CD8-positive, alpha-beta memory T cell (primary cell): ENCODE measurements at regions of chr3 and their contacts with region 1.

Region 1: GRCh38 chr3:46987743-46988401 is 8.4 kb downstream of the NBEAL2 start:
- DNase-seq: peak; percentile 86 to 96 (median 89)
- H3K4me3 ChIP-seq: peak overlapping the region; percentile 53
- H3K4me3 Mint-ChIP-seq: peak overlapping the region; percentile 74 to 90 (median 83)
- H3K27ac ChIP-seq: peak overlapping the region; percentile 84
- H3K27ac Mint-ChIP-seq: peak overlapping the region; percentile 73 to 97 (median 94)
- H3K4me1 ChIP-seq: peaks cover 63% of the 10 kb centered on the region
- H3K4me1 Mint-ChIP-seq: peaks cover 64 to 87% (median 73%) of the 10 kb centered on the region in 3 donors
- H3K27me3 ChIP-seq: no peaks in the 10 kb centered on the region
- H3K27me3 Mint-ChIP-seq: no peaks in the 10 kb centered on the region

Region 2: DNA sequence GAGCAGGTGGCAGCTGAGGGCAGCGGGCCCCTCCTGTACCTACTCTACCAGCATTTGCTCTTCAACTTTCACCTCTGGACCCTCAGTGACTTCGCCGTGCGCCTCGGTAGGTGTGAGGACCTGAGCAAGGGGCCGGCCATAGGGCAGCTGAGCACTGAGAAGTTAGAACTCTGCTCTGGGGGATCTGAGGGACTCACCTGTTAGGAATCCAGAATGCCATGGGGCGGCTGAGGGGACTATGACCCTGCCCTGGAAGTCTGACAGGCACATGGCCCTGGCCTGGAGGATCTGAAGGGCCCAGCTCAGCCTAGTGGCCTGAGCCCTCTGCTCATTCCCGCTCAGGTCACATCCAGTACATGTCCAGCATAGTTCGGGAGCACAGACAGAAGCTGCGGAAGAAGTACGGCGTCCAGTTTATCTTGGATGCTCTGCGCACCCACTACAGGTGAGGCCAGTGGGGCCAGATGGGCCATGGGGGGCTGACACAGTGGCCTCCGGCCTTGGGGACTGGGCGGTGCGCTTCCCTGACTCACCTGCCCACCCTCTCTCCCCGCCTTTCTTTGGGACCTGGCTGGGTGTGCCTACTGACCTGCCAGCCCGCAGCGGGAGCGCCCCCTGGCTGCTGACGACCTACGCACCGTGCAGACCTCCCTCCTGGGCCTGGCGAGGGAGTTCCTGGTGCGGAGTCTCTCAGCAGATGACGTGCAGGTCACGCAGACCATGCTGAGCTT is 10.4 kb after region 1 on chr3:
- CTCF ChIA-PET with region 1: interaction called, 13 read pairs
- POLR2A ChIA-PET with region 1: no interaction called
- DNase-seq: peak; percentile 50 to 80 (median 62)
- H3K4me3 ChIP-seq: no peak overlapping the region
- H3K4me3 Mint-ChIP-seq: no peak overlapping the region
- H3K27ac ChIP-seq: no peak overlapping the region
- H3K27ac Mint-ChIP-seq: peak overlapping the region in 6 of 8 donors; percentile 1 to 86 (median 76)
- H3K4me1 ChIP-seq: peaks cover 6% of the 10 kb centered on the region
- H3K4me1 Mint-ChIP-seq: peaks cover 17 to 35% (median 18%) of the 10 kb centered on the region in 3 donors
- H3K27me3 ChIP-seq: no peaks in the 10 kb centered on the region
- H3K27me3 Mint-ChIP-seq: no peaks in the 10 kb centered on the region